B cell (primary cell): ENCODE measurements at regions of chr5 and their contacts with region 1.

Region 1: GRCh38 chr5:129767906-129768380 is 20.0 kb downstream of the MINAR2 start:
- DNase-seq: peak; percentile 65
- ATAC-seq: peak; percentile 74
- H3K4me3 ChIP-seq: no peak overlapping the region
- H3K4me3 Mint-ChIP-seq: no peak overlapping the region
- H3K27ac ChIP-seq: no peak overlapping the region
- H3K27ac Mint-ChIP-seq: no peak overlapping the region
- H3K4me1 ChIP-seq: no peaks in the 10 kb centered on the region
- H3K4me1 Mint-ChIP-seq: peaks cover 2% of the 10 kb centered on the region
- H3K27me3 ChIP-seq: no peaks in the 10 kb centered on the region
- H3K27me3 Mint-ChIP-seq: peaks cover 3% of the 10 kb centered on the region
- CTCF ChIP-seq: peak; percentile 91

Region 2: DNA sequence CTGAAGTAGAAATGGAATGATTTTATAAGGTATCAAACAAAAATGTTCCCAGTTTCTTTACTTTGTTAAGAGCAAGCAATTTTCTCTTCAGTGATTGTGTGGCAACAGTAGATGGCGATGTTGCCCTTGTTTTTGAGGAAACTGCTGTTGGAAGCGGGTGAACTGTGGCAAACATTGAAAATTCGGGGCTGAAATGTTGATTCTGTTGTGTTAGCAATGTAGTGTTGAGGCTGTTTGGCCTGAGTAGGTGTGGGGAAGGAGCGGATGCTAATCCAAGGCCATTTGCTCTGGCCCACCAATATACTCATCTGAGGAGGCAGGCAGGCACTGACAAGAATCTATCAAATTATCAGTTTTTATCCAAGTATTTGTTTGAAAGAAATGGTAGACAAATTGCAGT is 1554.6 kb before region 1 on chr5:
- CTCF ChIA-PET with region 1: no interaction called
- POLR2A ChIA-PET with region 1: no interaction called
- intact Hi-C with region 1: loop called (anchors 2 kb)
- DNase-seq: peak; percentile 23
- ATAC-seq: no peak
- H3K4me3 ChIP-seq: no peak overlapping the region
- H3K4me3 Mint-ChIP-seq: no peak overlapping the region
- H3K27ac ChIP-seq: no peak overlapping the region
- H3K27ac Mint-ChIP-seq: no peak overlapping the region
- H3K4me1 ChIP-seq: no peaks in the 10 kb centered on the region
- H3K4me1 Mint-ChIP-seq: no peaks in the 10 kb centered on the region
- H3K27me3 ChIP-seq: no peaks in the 10 kb centered on the region
- H3K27me3 Mint-ChIP-seq: no peaks in the 10 kb centered on the region
- CTCF ChIP-seq: peak; percentile 61

Region 3: GRCh38 chr5:128572051-128572929 is 1195.7 kb before region 1 on chr5:
- CTCF ChIA-PET with region 1: no interaction called
- POLR2A ChIA-PET with region 1: no interaction called
- intact Hi-C with region 1: no loop called
- DNase-seq: no peak
- ATAC-seq: no peak
- H3K4me3 ChIP-seq: no peak overlapping the region
- H3K4me3 Mint-ChIP-seq: no peak overlapping the region
- H3K27ac ChIP-seq: no peak overlapping the region
- H3K27ac Mint-ChIP-seq: no peak overlapping the region
- H3K4me1 ChIP-seq: no peaks in the 10 kb centered on the region
- H3K4me1 Mint-ChIP-seq: no peaks in the 10 kb centered on the region
- H3K27me3 ChIP-seq: no peaks in the 10 kb centered on the region
- H3K27me3 Mint-ChIP-seq: no peaks in the 10 kb centered on the region
- CTCF ChIP-seq: no peak

Region 4: DNA sequence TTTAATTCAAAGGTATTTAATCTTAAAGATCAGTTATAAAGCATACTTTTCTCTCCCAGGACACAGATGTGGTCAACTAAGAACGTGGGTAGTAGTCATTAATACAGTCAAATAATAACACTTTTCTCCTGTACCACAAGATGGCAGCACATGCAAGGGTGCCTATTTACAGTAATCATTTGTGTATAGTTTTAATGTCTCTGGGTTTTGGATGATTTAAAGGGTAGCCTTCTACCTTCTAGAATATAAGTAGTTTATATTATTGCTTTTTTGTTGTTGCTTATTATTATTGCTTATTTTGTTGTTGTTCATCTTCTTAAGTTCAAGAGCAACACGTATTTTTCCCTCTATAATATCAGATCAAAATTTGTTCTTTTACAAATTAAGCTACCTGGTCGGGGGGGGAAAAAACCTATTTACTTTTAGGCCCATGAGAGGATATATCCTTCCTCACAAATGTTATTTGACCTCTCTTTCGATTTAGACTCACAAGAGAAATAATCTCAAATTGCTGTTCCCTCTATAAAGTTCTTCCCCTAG is 862.3 kb before region 1 on chr5:
- CTCF ChIA-PET with region 1: interaction called, 70 read pairs
- POLR2A ChIA-PET with region 1: no interaction called
- intact Hi-C with region 1: no loop called
- DNase-seq: peak; percentile 53
- ATAC-seq: peak; percentile 47
- H3K4me3 ChIP-seq: no peak overlapping the region
- H3K4me3 Mint-ChIP-seq: no peak overlapping the region
- H3K27ac ChIP-seq: no peak overlapping the region
- H3K27ac Mint-ChIP-seq: no peak overlapping the region
- H3K4me1 ChIP-seq: no peaks in the 10 kb centered on the region
- H3K4me1 Mint-ChIP-seq: no peaks in the 10 kb centered on the region
- H3K27me3 ChIP-seq: no peaks in the 10 kb centered on the region
- H3K27me3 Mint-ChIP-seq: no peaks in the 10 kb centered on the region
- CTCF ChIP-seq: peak; percentile 86

Region 5: GRCh38 chr5:129852747-129853352 is 84.9 kb after region 1 on chr5:
- CTCF ChIA-PET with region 1: interaction called, 10 read pairs
- POLR2A ChIA-PET with region 1: no interaction called
- intact Hi-C with region 1: no loop called
- DNase-seq: peak; percentile 53
- ATAC-seq: no peak
- H3K4me3 ChIP-seq: no peak overlapping the region
- H3K4me3 Mint-ChIP-seq: no peak overlapping the region
- H3K27ac ChIP-seq: no peak overlapping the region
- H3K27ac Mint-ChIP-seq: no peak overlapping the region
- H3K4me1 ChIP-seq: no peaks in the 10 kb centered on the region
- H3K4me1 Mint-ChIP-seq: no peaks in the 10 kb centered on the region
- H3K27me3 ChIP-seq: no peaks in the 10 kb centered on the region
- H3K27me3 Mint-ChIP-seq: peaks cover 4% of the 10 kb centered on the region
- CTCF ChIP-seq: peak; percentile 92

Region 6: GRCh38 chr5:131109540-131110255 is 1341.8 kb after region 1 on chr5:
- CTCF ChIA-PET with region 1: interaction called, 13 read pairs
- POLR2A ChIA-PET with region 1: no interaction called
- intact Hi-C with region 1: no loop called
- DNase-seq: peak; percentile 53
- ATAC-seq: peak; percentile 39
- H3K4me3 ChIP-seq: no peak overlapping the region
- H3K4me3 Mint-ChIP-seq: no peak overlapping the region
- H3K27ac ChIP-seq: no peak overlapping the region
- H3K27ac Mint-ChIP-seq: no peak overlapping the region
- H3K4me1 ChIP-seq: no peaks in the 10 kb centered on the region
- H3K4me1 Mint-ChIP-seq: no peaks in the 10 kb centered on the region
- H3K27me3 ChIP-seq: no peaks in the 10 kb centered on the region
- H3K27me3 Mint-ChIP-seq: no peaks in the 10 kb centered on the region
- CTCF ChIP-seq: peak; percentile 87

Region 7: GRCh38 chr5:131417240-131417869 is 1649.4 kb after region 1 on chr5:
- CTCF ChIA-PET with region 1: no interaction called
- POLR2A ChIA-PET with region 1: no interaction called
- intact Hi-C with region 1: loop called (anchors 10 kb)
- DNase-seq: peak; percentile 82
- ATAC-seq: peak; percentile 63
- H3K4me3 ChIP-seq: peak overlapping the region in 1 of 5 experiments; percentile 43
- H3K4me3 Mint-ChIP-seq: peak overlapping the region; percentile 54
- H3K27ac ChIP-seq: no peak overlapping the region
- H3K27ac Mint-ChIP-seq: no peak overlapping the region
- H3K4me1 ChIP-seq: peaks cover 18 to 19% of the 10 kb centered on the region in 2 donors
- H3K4me1 Mint-ChIP-seq: peaks cover 32% of the 10 kb centered on the region
- H3K27me3 ChIP-seq: no peaks in the 10 kb centered on the region
- H3K27me3 Mint-ChIP-seq: no peaks in the 10 kb centered on the region
- CTCF ChIP-seq: peak; percentile 97